Left cardiac atrium (tissue), 4 donors: ENCODE measurements at regions of chr20 and their contacts with region 1.

Region 1: GRCh38 chr20:2206957-2207769 is 88.6 kb upstream of the TGM3 start:
- DNase-seq: peak; percentile 79
- ATAC-seq: peak; percentile 95

Region 2: GRCh38 chr20:2183381-2183780 is 23.8 kb before region 1 on chr20:
- intact Hi-C with region 1: no loop called
- DNase-seq: no peak
- ATAC-seq: no peak

Region 3: GRCh38 chr20:2349818-2350508 is 142.8 kb after region 1 on chr20:
- intact Hi-C with region 1: loop called in 1 of 2 experiments (anchors 10 kb)
- DNase-seq: no peak
- ATAC-seq: no peak

Region 4: GRCh38 chr20:2800521-2801285 is 593.5 kb after region 1 on chr20 and contains the start of gene CPXM1:
- intact Hi-C with region 1: no loop called
- DNase-seq: no peak
- ATAC-seq: peak; percentile 54 to 68
- total RNA-seq, gene CPXM1: 4.3 to 8.7 TPM